Heart right ventricle (tissue), 16 donors: ENCODE measurements at regions of chr7 and their contacts with region 1.

Region 1: GRCh38 chr7:140294454-140294853 is 103.9 kb downstream of the SLC37A3 start:
- DNase-seq: no peak
- ATAC-seq: no peak
- H3K4me3 ChIP-seq: no peak overlapping the region
- H3K27ac ChIP-seq: no peak overlapping the region
- H3K4me1 ChIP-seq: no peaks in the 10 kb centered on the region
- H3K27me3 ChIP-seq: no peaks in the 10 kb centered on the region
- CTCF ChIP-seq: no peak

Region 2: GRCh38 chr7:140249036-140249806 is 45.2 kb before region 1 on chr7:
- intact Hi-C with region 1: no loop called
- DNase-seq: no peak
- ATAC-seq: no peak
- H3K4me3 ChIP-seq: no peak overlapping the region
- H3K27ac ChIP-seq: no peak overlapping the region
- H3K4me1 ChIP-seq: peaks cover 0 to 43% (median 0%) of the 10 kb centered on the region in 9 donors
- H3K27me3 ChIP-seq: no peaks in the 10 kb centered on the region
- CTCF ChIP-seq: no peak

Region 3: GRCh38 chr7:140375892-140376730 is 81.7 kb after region 1 on chr7:
- intact Hi-C with region 1: no loop called
- DNase-seq: no peak
- ATAC-seq: no peak
- H3K4me3 ChIP-seq: no peak overlapping the region
- H3K27ac ChIP-seq: peak overlapping the region in 1 of 10 donors; percentile 59
- H3K4me1 ChIP-seq: no peaks in the 10 kb centered on the region
- H3K27me3 ChIP-seq: no peaks in the 10 kb centered on the region
- CTCF ChIP-seq: no peak

Region 4: DNA sequence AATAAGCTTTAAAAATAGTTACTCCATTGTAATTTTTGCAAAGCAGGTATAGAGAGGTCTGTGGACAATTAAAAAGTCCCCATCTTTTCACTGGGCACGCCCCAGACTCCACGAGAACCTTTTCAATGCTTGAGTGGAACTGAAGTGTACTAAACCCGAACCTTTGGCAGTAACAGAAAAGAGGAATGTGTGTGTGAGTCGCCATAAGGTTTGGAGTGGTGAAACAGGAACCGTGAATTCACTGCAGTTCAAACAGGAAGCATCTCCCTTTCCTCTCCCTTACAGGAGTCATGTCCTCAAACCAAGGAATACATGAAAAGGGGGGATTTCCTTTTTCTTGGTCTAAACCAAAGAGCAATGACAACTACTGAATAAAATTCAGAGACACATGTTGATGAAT is 425.3 kb after region 1 on chr7:
- intact Hi-C with region 1: loop called in 1 of 10 experiments (anchors 5 kb)
- DNase-seq: no peak
- ATAC-seq: no peak
- H3K4me3 ChIP-seq: no peak overlapping the region
- H3K27ac ChIP-seq: no peak overlapping the region
- H3K4me1 ChIP-seq: peaks cover 0 to 7% (median 0%) of the 10 kb centered on the region in 9 donors
- H3K27me3 ChIP-seq: no peaks in the 10 kb centered on the region
- CTCF ChIP-seq: no peak